Spleen (tissue), 13 donors: ENCODE measurements at regions of chr3 and their contacts with region 1.

Region 1: DNA sequence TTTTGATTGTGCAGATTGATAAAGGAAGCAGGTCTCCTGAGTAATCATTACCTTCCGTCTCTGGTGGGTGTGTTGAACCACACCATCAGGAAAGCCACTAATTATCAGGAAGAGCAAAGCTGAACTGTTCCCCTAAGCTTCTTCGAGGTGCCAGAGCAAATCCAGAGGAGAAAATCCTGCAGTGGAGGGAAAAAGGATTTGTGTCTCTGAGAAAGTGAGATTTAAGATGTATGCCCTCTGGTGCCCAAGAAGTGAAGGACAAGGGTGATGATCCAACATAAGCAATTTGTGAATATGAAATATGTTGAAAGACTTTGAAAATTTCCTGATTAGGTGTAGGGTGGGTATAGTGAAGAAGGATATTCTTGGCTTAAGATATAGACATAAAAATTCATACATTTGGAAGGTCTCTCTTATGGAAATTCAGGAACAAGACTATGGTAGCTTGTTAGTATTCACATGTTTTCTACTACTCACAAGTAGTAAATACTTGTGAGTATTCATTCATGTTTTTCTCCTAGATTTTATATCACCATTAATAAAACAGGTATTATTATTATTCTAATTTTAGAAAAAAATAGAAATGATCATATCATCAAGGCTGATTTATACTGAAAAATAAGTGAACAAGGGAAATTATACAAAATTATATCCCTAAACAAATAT is 34.8 kb downstream of the COMMD2 start:
- DNase-seq: no peak
- H3K4me3 ChIP-seq: peak overlapping the region in 4 of 8 donors; percentile 10 to 45 (median 26)
- H3K27ac ChIP-seq: peak overlapping the region in 2 of 8 donors; percentile 17 to 23
- H3K4me1 ChIP-seq: no peaks in the 10 kb centered on the region
- H3K27me3 ChIP-seq: no peaks in the 10 kb centered on the region
- CTCF ChIP-seq: peak; percentile 36 to 82 (median 67)
- POLR2A ChIP-seq: no peak

Region 2: GRCh38 chr3:149512209-149512782 is 205.2 kb before region 1 on chr3:
- intact Hi-C with region 1: loop called (anchors 5 kb)
- DNase-seq: peak; percentile 83
- H3K4me3 ChIP-seq: no peak overlapping the region
- H3K27ac ChIP-seq: no peak overlapping the region
- H3K4me1 ChIP-seq: peaks cover 0 to 21% (median 13%) of the 10 kb centered on the region in 6 donors
- H3K27me3 ChIP-seq: no peaks in the 10 kb centered on the region
- CTCF ChIP-seq: peak; percentile 27 to 78 (median 70)
- POLR2A ChIP-seq: no peak